Dendritic cell treated with granulocyte-macrophage colony-stimulating factor and Interleukin-4, amounts not matched to agents 40 ng/mL and 50 ng/mL, for 4 days (primary cell): ENCODE measurements at regions of chr11 and their contacts with region 1.

Region 1: DNA sequence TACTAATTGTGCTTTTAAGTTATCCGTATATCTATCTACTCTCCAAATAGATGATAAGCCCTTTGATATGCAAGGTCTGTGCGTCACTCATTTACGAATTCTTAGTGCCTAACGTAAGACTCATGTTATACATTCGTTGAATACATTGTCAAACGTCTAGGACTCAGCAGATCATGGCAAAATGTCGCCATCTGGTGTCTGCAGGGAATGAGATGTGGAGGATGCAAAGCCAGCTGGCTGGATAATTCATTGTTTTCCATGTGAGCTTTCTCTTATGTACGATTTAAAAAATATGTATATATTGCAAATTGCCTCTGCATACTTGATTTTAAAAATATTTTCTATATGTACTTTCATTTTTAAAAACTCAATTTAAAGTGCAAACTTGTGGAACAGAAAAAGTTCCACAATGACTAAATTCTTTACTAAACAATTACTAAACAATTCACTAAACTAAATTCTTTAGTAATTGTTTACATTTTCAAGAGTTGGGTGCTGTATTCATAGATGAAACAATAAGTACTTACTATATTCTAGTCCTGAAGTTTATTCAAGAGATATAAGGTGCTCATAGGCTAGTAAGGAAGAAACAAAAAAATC is 33.8 kb downstream of the ZNF202 start:
- H3K4me3 Mint-ChIP-seq: no peak overlapping the region
- H3K27ac Mint-ChIP-seq: no peak overlapping the region
- H3K4me1 Mint-ChIP-seq: no peaks in the 10 kb centered on the region
- H3K27me3 Mint-ChIP-seq: peaks cover 3% of the 10 kb centered on the region

Region 2: GRCh38 chr11:123640677-123641494 is 66.8 kb before region 1 on chr11:
- intact Hi-C with region 1: loop called (anchors 1 kb)
- H3K4me3 Mint-ChIP-seq: no peak overlapping the region
- H3K27ac Mint-ChIP-seq: no peak overlapping the region
- H3K4me1 Mint-ChIP-seq: peaks cover 5% of the 10 kb centered on the region
- H3K27me3 Mint-ChIP-seq: peaks cover 7% of the 10 kb centered on the region

Region 3: DNA sequence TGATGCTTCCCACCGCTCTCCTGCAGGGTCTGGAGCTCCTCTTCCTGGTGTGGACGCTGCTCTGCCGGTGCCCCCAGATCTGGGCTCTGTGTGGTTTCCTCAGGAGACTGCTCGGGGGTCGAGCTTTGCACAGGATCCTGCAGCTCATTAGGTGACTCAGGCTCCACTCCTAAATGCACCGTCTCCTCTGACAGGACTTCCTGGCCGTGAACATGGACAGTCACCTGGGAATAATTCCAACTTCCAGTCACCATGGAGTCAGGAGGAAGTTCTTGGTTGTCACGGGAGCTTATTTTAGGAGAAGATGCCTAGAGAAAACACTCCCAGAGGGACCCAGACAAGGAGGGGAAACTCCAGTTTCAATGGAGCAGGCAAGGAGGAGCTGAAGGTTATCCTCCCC is 21.9 kb after region 1 on chr11:
- intact Hi-C with region 1: no loop called
- H3K4me3 Mint-ChIP-seq: no peak overlapping the region
- H3K27ac Mint-ChIP-seq: no peak overlapping the region
- H3K4me1 Mint-ChIP-seq: no peaks in the 10 kb centered on the region
- H3K27me3 Mint-ChIP-seq: no peaks in the 10 kb centered on the region